Transverse colon (tissue), 4 donors: ENCODE measurements at regions of chr7 and their contacts with region 1.

Region 1: DNA sequence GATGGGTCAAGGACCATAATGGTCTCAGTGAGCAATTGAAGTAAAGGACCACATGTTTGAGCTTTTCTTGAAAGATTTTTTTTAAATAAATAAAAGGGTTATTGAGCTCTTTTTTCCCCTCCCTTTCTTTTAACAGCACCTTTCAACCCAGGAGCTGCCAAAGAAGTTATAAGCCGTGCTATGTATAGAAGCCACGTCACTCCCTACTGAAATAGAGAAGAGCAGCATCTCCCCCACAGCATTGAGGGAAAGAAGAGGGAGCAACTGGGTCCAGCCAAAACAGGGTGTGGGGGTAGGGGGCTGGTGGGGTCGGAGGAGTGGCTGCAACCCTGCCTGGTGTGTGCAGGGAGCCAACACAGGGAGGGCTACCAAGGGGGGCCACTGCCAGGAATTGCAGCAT is 227.2 kb downstream of the PLXNA4 start:
- DNase-seq: no peak
- H3K4me3 ChIP-seq: no peak overlapping the region
- H3K27ac ChIP-seq: no peak overlapping the region
- H3K4me1 ChIP-seq: no peaks in the 10 kb centered on the region
- H3K27me3 ChIP-seq: peaks cover 16% of the 10 kb centered on the region
- CTCF ChIP-seq: no peak
- EP300 ChIP-seq: no peak
- POLR2A ChIP-seq: no peak

Region 2: GRCh38 chr7:132009778-132010177 is 339.3 kb before region 1 on chr7:
- in situ Hi-C with region 1: no loop called
- intact Hi-C with region 1: loop called (anchors 2 kb)
- DNase-seq: no peak
- H3K4me3 ChIP-seq: no peak overlapping the region
- H3K27ac ChIP-seq: peak overlapping the region in 1 of 4 donors; percentile 18
- H3K4me1 ChIP-seq: no peaks in the 10 kb centered on the region
- H3K27me3 ChIP-seq: no peaks in the 10 kb centered on the region
- CTCF ChIP-seq: no peak
- EP300 ChIP-seq: no peak
- POLR2A ChIP-seq: no peak